ENCODE measurements at regions of chr10 and their contacts with region 1.

Region 1: GRCh38 chr10:29998142-29998808 is 61.1 kb downstream of the JCAD start:
- H3K4me3 ChIP-seq: no peak overlapping the region
- H3K27ac ChIP-seq: no peak overlapping the region
- H3K4me1 ChIP-seq: peaks cover 2% of the 10 kb centered on the region; the same call in 1 of the 2 replicates
- CTCF ChIP-seq: peak; percentile 97

Region 2: DNA sequence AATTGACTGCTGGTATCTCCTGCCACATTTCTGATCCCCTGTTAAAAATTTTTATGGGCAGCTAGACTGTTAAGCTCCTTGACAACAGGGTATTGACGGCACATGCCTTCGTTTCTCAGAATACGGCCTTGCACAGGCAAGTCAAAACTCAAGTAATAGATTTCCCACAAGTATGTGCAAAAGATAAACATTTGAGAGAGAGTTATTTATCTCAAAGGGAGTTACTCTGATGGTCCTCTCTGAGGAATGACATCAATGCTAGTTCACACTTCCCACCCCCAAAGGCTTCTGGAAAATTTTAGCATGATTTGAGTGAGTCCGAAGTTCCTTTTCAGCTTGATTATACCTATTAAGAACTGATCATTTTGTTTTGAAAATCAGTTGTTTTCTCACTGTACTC is 10.8 kb before region 1 on chr10:
- CTCF ChIA-PET with region 1: interaction called, 50 read pairs
- POLR2A ChIA-PET with region 1: interaction called, 3 read pairs
- H3K4me3 ChIP-seq: no peak overlapping the region
- H3K27ac ChIP-seq: no peak overlapping the region
- H3K4me1 ChIP-seq: no peaks in the 10 kb centered on the region
- CTCF ChIP-seq: no peak

Region 3: GRCh38 chr10:30013757-30014156 is 15.5 kb after region 1 on chr10:
- CTCF ChIA-PET with region 1: interaction called, 39 read pairs
- POLR2A ChIA-PET with region 1: no interaction called
- H3K4me3 ChIP-seq: no peak overlapping the region
- H3K27ac ChIP-seq: no peak overlapping the region
- H3K4me1 ChIP-seq: no peaks in the 10 kb centered on the region
- CTCF ChIP-seq: no peak

Region 4: DNA sequence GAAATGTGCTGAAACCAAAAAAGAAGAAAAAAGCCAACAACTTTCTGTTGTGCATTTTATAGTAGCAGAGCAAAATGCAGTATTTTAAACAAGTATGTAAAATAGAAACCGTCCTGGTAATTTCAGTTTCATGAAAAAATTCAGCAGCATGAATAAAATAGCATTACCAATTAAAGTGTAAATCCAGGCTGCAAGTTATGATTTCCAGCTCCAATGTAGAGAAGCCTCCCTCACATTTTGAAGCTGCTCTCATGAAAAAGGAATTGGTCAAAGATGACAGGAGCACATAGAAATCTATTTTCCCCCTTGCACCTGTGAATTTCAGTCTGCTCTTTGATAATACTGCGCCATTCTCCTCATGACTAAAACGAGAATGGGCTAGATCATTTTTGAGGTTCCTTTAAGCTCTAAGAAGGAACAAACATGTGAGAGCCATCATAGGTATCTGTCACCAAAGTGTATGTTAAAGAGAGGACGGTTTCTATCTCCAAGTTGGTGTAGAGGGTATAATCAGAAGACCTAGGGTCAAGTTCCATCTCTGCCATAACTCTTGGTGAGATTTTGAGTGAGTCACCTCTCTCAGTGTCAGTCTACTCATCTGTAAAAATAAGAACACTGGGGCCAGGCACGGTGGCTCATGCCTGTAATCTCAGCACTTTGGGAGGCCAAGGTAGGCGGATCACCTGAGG is 243.3 kb after region 1 on chr10:
- CTCF ChIA-PET with region 1: interaction called, 55 read pairs
- POLR2A ChIA-PET with region 1: interaction called, 3 read pairs
- H3K4me3 ChIP-seq: no peak overlapping the region
- H3K27ac ChIP-seq: no peak overlapping the region
- H3K4me1 ChIP-seq: no peaks in the 10 kb centered on the region; the same call in 1 of the 2 replicates
- CTCF ChIP-seq: no peak

Region 5: DNA sequence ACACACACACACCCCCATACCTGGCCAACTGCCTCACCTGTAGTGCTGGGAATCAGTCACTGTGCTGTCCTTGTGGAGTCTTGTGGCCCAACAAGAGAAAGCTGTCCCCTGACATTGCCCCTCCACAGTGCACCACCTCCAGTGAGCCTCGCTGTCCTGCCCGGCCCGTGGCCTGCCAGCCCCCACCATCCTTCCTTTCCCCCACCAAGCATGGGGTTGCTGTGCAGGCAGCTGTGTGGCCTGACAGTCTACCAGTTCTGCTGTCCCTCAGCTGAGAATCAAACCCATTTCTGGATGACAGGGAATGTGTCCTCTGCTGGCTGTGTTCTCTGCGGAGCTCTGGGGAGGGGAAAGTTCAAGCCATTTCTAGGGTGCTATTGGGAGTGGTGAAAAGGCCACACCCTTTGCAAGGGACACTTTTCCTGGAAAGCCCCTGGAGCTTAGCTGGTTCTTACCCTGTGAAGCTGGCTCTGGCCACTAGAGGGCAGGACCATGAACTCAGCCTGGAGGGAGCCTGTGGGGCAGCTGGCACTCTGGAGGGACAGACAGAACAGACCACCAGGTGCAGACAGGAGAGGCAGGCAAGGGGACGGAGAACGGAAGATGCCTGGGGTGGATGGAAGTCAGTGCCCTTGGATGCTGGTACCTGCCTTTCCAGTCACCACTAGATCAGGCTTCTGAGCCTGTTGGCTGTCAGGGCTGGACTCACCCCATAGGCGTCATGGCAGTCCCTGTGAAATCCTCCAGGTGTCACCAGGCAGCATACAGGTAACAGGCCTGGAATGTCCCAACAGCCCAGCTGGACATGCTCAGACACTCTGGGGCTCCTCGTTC is 361.3 kb after region 1 on chr10:
- CTCF ChIA-PET with region 1: interaction called, 11 read pairs
- POLR2A ChIA-PET with region 1: no interaction called
- H3K4me3 ChIP-seq: no peak overlapping the region
- H3K27ac ChIP-seq: no peak overlapping the region
- H3K4me1 ChIP-seq: no peaks in the 10 kb centered on the region
- CTCF ChIP-seq: peak; percentile 60